ENCODE measurements at regions of chr6 and their contacts with region 1.

Region 1: GRCh38 chr6:18503593-18504231 is 116.6 kb downstream of the RNF144B start:
- DNase-seq: peak in 4 of 5 donors; percentile 39 to 57 (median 47)
- ATAC-seq: peak; percentile 66 to 86 (median 84)
- H3K4me3 ChIP-seq: peak overlapping the region in 10 of 12 donors; percentile 22 to 59 (median 44)
- H3K27ac ChIP-seq: peak overlapping the region in 5 of 12 donors; percentile 43 to 74 (median 49)
- H3K4me1 ChIP-seq: peaks cover 0 to 30% (median 0%) of the 10 kb centered on the region in 12 donors
- H3K27me3 ChIP-seq: no peaks in the 10 kb centered on the region
- CTCF ChIP-seq: peak; percentile 77 to 95 (median 88)
- POLR2A ChIP-seq: no peak

Region 2: DNA sequence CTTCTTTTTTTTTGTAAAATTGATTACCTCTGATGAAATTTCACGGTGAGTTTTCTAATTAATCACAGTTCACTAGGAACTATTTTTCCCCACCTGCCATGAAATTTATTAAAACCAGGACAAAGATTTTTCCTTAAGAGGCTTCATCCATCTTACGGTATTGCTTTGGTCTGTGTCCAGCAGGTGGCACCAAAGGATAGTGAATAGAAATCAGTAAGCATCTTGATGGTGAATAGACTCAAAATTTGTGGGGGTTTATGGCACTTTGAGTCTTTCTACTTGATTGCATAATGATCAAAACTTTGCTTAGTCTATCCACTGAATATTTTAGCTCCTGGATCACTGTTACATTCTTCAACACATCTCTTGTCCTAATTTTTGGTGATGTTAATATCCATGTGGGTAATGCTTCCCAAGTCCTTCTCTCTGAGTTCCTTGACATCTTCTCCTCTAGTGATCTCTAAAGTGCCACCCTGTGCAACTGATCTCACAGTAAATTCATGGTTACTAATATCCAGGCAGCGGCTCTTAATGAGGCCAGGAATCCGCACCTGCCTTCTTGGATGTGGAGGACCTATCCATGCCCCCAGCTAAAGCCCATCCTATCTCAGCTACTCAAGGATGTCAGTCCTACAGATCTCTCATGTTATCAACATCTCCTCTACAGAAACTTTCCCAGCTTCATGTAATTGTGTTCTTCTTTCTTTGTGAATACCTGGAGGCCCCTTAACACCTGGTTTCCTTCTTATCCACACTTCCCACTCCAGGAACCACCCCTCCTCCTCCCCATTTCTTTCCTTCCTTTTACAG is 1347.4 kb before region 1 on chr6:
- intact Hi-C with region 1: loop called in 1 of 10 experiments (anchors 5 kb)
- DNase-seq: peak in 4 of 5 donors; percentile 36 to 58 (median 55)
- ATAC-seq: peak in 2 of 4 donors; percentile 42 to 57
- H3K4me3 ChIP-seq: no peak overlapping the region
- H3K27ac ChIP-seq: no peak overlapping the region
- H3K4me1 ChIP-seq: no peaks in the 10 kb centered on the region
- H3K27me3 ChIP-seq: no peaks in the 10 kb centered on the region
- CTCF ChIP-seq: peak; percentile 57 to 90 (median 80)
- POLR2A ChIP-seq: no peak

Region 3: DNA sequence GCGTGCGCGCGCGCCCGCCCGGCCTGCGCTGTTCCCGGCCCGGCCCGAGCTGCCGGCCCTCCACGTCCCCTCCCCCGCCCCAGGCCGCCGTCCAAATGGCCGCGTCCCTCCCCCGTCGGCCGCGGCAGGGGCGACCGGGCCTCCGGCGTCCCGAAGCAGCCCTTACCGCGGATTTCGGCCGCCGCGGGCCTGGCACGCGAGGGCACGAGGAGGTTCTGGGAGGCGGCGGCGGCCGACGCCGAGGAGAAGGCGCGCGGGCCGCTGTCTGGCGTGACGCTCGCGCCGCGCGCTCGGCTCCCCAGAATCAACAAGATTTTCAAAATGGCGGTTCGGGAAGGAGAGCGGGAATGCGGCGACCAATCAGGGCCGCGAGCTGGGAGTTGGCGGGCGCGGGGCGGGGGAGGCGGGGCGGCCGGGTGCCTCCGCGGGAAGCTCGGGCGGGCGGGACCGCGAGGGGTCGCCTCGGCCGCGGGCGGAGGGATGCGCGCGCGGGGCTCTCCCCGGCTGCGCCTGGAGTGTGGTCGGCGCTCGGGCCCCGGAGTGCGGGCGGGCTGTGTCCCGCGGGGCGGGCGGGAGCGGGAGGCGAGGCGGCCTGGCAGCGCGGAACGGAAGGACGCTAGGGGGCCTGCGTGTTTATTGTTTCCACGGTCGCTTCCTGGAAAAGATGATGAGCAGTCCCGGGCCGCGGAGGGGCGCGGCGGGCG is 239.3 kb before region 1 on chr6 and contains the start of gene DEK:
- intact Hi-C with region 1: loop called in 1 of 10 experiments (anchors 5 kb)
- DNase-seq: peak; percentile 90 to 93 (median 90)
- ATAC-seq: peak; percentile 48 to 92 (median 90)
- H3K4me3 ChIP-seq: peak within 1 kb of the TSS; percentile 43 to 99 (median 92)
- H3K27ac ChIP-seq: peak within 1 kb of the TSS; percentile 90 to 100 (median 96)
- H3K4me1 ChIP-seq: peaks cover 0 to 46% (median 31%) of the 10 kb centered on the region in 12 donors
- H3K27me3 ChIP-seq: no peaks in the 10 kb centered on the region
- CTCF ChIP-seq: peak; percentile 24 to 85 (median 56)
- POLR2A ChIP-seq: peak in 1 of 2 donors; percentile 34
- total RNA-seq, gene DEK: 41.3 to 83.0 (median 64.7) TPM

Region 4: DNA sequence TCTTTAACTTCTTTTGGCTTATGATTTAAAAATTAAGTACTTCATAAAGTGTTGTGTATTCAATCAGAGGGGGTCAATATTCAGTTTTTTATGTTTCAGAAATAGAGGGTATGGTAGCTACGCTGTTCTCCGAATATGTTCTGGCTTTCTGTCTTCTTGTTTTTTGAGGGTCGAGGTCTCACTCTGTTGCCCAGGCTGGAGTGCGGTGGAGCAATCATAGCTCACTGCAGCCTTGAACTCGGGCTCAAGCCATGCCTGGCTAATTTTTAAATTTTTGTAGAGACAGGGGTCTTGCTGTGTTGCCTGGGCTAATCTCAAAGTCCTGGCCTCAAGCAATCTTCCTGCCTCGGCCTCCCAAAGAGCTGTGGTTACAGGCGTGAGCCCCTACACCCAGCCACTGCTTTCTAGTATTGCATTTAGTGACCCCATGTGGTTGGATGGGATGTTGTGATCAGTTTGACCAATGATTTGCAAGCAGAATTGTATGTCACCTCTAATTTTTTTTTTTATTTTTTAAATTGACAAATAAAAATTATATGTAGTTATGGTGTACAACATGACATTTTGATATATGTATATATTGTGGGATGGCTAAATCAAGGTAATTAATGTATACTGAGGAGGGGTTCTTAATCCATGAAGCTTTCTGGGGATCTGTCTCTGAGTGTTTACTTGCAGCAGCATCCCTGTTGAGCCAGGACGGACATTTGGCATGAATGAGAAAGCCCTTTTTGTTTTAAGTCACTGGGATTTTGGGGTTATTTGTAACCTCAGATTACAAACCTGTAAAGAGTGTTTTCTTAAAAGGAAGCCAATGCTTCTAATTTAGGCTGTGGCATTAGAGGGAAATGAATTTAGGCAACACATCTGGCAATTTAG is 200.9 kb before region 1 on chr6:
- intact Hi-C with region 1: no loop called
- DNase-seq: no peak
- ATAC-seq: peak in 2 of 4 donors; percentile 39 to 74
- H3K4me3 ChIP-seq: no peak overlapping the region
- H3K27ac ChIP-seq: no peak overlapping the region
- H3K4me1 ChIP-seq: peaks cover 0 to 2% (median 0%) of the 10 kb centered on the region in 12 donors
- H3K27me3 ChIP-seq: no peaks in the 10 kb centered on the region
- CTCF ChIP-seq: peak in 5 of 12 donors; percentile 13 to 30 (median 25)
- POLR2A ChIP-seq: no peak

Region 5: DNA sequence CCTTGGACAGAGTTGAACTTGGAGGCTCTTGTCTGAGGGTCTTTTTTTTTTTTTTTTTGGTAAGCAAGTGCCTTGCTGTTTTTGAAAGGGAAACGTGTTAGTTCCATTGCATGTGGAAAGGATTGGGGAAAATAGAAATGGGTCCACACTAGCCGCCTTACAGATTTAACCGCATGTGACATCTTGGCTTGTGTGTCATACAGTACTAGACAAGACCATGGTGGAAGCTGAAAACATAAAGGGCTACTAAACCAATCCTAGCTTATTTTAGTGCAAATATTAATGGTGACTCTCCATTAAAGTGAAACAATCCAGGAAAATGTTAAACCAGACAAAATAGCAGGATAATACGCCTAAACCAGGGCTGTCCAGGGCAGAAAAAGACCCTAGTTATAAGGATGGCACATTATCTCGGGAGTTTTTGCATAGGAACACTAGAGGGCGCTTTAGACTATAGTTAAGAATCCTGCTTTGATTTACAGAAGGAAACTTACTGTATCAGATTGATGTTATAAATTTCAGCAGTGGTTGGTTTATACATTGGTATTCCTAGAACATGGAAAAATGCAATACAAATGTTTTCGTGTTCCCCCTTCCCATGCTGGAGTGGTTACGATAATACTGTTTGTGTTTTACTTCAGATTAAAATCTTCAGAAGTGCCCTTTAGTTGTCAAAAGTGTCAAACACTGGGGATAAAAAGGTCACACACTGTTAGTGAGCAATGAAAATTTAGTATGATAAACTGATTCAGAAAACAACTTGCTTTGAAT is 179.6 kb before region 1 on chr6:
- intact Hi-C with region 1: loop called (anchors 1 to 2 kb)
- DNase-seq: no peak
- ATAC-seq: peak in 3 of 4 donors; percentile 62 to 72 (median 70)
- H3K4me3 ChIP-seq: no peak overlapping the region
- H3K27ac ChIP-seq: no peak overlapping the region
- H3K4me1 ChIP-seq: peaks cover 0 to 29% (median 0%) of the 10 kb centered on the region in 12 donors
- H3K27me3 ChIP-seq: no peaks in the 10 kb centered on the region
- CTCF ChIP-seq: peak; percentile 62 to 86 (median 74)
- POLR2A ChIP-seq: no peak

Region 6: GRCh38 chr6:18387061-18387721 is 116.5 kb before region 1 on chr6 and contains the start of gene RNF144B:
- intact Hi-C with region 1: loop called in 2 of 10 experiments (anchors 5 to 10 kb)
- DNase-seq: peak; percentile 82 to 93 (median 90)
- ATAC-seq: peak; percentile 93 to 98 (median 97)
- H3K4me3 ChIP-seq: peak within 1 kb of the TSS; percentile 50 to 83 (median 68)
- H3K27ac ChIP-seq: peak within 1 kb of the TSS; percentile 53 to 91 (median 76)
- H3K4me1 ChIP-seq: peaks cover 0 to 47% (median 19%) of the 10 kb centered on the region in 12 donors
- H3K27me3 ChIP-seq: no peaks in the 10 kb centered on the region
- CTCF ChIP-seq: no peak
- POLR2A ChIP-seq: peak in 1 of 2 donors; percentile 77
- total RNA-seq, gene RNF144B: 7.1 to 20.7 (median 12.3) TPM

Region 7: DNA sequence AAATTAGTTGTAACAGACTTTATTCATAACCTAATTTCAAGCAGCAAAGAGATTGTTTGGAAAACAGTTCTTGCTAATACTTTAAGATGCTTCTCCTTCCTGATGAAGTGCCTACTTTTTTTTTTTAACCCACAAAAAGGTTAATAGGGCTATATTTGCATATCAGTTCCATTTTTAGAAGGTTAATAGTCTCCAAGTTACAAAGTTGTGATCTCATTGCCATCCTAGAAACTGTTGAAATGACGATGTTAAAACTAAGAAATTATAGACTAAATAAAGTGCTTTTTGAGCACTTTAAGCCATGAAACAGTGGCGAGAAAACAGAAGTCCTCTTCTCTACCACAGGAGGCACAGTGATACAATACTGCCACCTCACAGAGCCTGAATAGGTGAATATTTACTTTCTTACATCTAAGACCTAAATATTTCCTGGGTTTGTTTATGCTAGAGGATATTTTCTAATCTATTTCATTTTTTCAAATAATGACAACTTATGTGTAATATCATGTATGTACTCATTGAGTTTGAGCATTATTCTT is 111.3 kb before region 1 on chr6:
- intact Hi-C with region 1: loop called in 2 of 10 experiments (anchors 5 to 10 kb)
- DNase-seq: no peak
- ATAC-seq: no peak
- H3K4me3 ChIP-seq: no peak overlapping the region
- H3K27ac ChIP-seq: no peak overlapping the region
- H3K4me1 ChIP-seq: peaks cover 0 to 67% (median 7%) of the 10 kb centered on the region in 12 donors
- H3K27me3 ChIP-seq: no peaks in the 10 kb centered on the region
- CTCF ChIP-seq: no peak
- POLR2A ChIP-seq: no peak

Region 8: DNA sequence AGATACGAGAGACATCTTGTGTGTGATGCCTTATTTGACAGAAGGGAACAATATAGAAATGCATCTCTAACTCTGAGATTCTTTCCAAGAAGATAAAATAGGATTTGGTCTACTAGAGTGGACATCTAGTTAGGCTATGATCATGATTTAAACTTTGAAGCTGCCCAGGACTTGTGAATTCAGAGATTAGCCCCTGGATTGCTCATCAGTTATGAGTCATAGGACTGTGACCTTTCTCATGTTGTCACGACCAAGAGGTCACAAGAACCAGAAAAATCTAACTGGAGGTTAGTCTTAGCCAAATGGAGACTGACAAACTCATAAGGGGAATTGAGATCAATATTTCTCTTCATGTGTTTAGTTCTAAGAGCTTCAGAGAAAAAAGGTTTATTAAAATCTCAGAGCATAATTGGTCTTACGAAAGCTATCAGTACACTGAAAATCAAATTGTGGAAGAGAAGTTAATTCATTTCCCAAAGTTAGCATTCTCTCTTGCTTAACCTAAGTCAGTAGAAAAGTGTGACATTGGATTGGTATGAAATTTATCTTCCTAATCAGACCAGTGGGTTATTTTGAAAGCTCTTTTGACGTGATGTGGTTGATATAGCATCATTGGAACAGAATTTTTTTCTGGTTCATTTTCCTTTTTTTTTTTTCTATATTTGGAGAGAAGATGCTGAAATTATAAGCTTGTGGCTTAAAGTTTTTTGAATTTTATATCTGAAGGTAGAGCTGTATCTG is 129.1 kb after region 1 on chr6:
- intact Hi-C with region 1: no loop called
- DNase-seq: no peak
- ATAC-seq: no peak
- H3K4me3 ChIP-seq: no peak overlapping the region
- H3K27ac ChIP-seq: no peak overlapping the region
- H3K4me1 ChIP-seq: no peaks in the 10 kb centered on the region
- H3K27me3 ChIP-seq: no peaks in the 10 kb centered on the region
- CTCF ChIP-seq: no peak
- POLR2A ChIP-seq: no peak